H1 (cell line): ENCODE measurements at regions of chr5 and their contacts with region 1.

Region 1: DNA sequence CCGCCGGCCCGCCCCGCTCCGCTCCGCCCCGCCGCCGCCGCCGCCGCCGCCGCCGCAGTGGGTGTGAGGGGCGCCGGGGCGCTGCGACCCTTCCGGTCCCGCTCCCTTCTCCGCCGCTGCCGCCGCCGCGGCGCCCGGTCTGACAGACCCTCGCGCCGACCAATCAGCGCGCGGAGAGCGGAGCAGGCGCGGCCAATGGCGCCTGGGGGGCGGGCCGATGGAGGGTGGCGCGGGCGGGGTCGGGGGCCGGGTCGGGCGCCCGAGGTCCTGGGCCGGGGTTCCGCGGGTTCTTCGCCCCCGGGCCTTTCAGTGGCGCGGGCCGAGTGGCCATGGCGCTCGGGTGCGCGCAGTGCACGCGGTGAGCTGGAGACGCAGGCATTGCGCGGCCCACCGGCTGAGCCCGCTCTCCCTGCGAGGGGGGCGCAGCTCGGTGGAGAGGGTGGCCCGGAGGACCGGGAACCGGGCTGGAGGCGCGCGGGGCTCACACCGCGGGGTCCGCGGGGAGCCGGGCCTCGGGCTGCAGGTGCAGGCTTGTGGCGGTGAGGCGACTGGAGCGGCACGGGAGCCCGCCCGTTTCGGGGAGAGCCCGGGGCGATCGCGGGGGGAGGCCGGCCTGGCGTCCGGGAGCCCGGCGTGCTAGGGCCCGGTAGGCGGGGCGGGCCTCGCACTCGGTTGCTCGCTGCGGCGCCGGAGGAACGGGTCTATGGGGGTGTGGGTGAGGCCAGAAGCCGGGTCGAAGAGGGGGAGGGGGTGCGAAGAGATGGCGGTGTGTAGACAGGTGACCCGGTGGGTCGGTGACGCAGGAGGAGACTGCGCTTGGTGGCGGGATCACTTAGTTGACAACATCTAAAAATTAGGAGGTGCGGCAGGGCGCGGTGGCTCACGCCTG is at the start of gene MAPK9:
- DNase-seq: peak in 1 of 2 experiments; percentile 88
- H3K4me3 ChIP-seq: peak within 1 kb of the TSS; percentile 65 to 97 (median 75)
- H3K27ac ChIP-seq: peak within 1 kb of the TSS; percentile 47; the same call in 1 of the 2 replicates
- H3K4me1 ChIP-seq: peaks cover 0 to 6% (median 5%) of the 10 kb centered on the region in 4 experiments; a peak in 6 of 7 replicates
- H3K27me3 ChIP-seq: no peaks in the 10 kb centered on the region
- CTCF ChIP-seq: no peak
- EP300 ChIP-seq: no peak
- POLR2A ChIP-seq: peak in 1 of 2 experiments; percentile 51; a peak in 1 of 3 replicates
- RAD21 ChIP-seq: no peak
- total RNA-seq, gene MAPK9: 37.9 and 43.7 TPM in 2 replicates

Region 2: GRCh38 chr5:180135128-180135955 is 156.8 kb before region 1 on chr5:
- CTCF ChIA-PET with region 1: no interaction called
- POLR2A ChIA-PET with region 1: no interaction called
- DNase-seq: peak in 1 of 2 experiments; percentile 33
- H3K4me3 ChIP-seq: no peak overlapping the region
- H3K27ac ChIP-seq: no peak overlapping the region
- H3K4me1 ChIP-seq: no peaks in the 10 kb centered on the region; a peak in 1 of 7 replicates
- H3K27me3 ChIP-seq: peaks cover 0 to 2% (median 0%) of the 10 kb centered on the region in 4 experiments; a peak in 1 of 7 replicates
- CTCF ChIP-seq: no peak
- EP300 ChIP-seq: no peak
- POLR2A ChIP-seq: no peak
- RAD21 ChIP-seq: no peak

Region 3: GRCh38 chr5:180209137-180209581 is 83.0 kb before region 1 on chr5 and contains the start of gene RASGEF1C:
- CTCF ChIA-PET with region 1: interaction called, 16 read pairs
- POLR2A ChIA-PET with region 1: no interaction called
- DNase-seq: peak in 1 of 2 experiments; percentile 82
- H3K4me3 ChIP-seq: peak within 1 kb of the TSS; percentile 30 to 58 (median 34); a peak in 7 of 8 replicates
- H3K27ac ChIP-seq: no peak within 1 kb of the TSS
- H3K4me1 ChIP-seq: peaks cover 0 to 8% (median 4%) of the 10 kb centered on the region in 4 experiments; a peak in 4 of 7 replicates
- H3K27me3 ChIP-seq: peaks cover 8 to 31% (median 21%) of the 10 kb centered on the region in 4 experiments; a peak in 6 of 7 replicates
- CTCF ChIP-seq: peak in 2 of 3 experiments; percentile 63 to 91; a peak in 3 of 4 replicates
- EP300 ChIP-seq: no peak
- POLR2A ChIP-seq: no peak
- RAD21 ChIP-seq: peak in 1 of 2 experiments; percentile 51; a peak in 2 of 4 replicates
- total RNA-seq, gene RASGEF1C: 0.46 and 0.61 TPM in 2 replicates

Region 4: GRCh38 chr5:180304431-180305375 is 12.5 kb after region 1 on chr5:
- CTCF ChIA-PET with region 1: interaction called, 30 read pairs
- POLR2A ChIA-PET with region 1: interaction called, 12 read pairs
- DNase-seq: no peak
- H3K4me3 ChIP-seq: no peak overlapping the region
- H3K27ac ChIP-seq: no peak overlapping the region
- H3K4me1 ChIP-seq: no peaks in the 10 kb centered on the region
- H3K27me3 ChIP-seq: no peaks in the 10 kb centered on the region
- CTCF ChIP-seq: no peak
- EP300 ChIP-seq: no peak
- POLR2A ChIP-seq: peak in 1 of 2 experiments; percentile 16; a peak in 1 of 3 replicates
- RAD21 ChIP-seq: no peak

Region 5: DNA sequence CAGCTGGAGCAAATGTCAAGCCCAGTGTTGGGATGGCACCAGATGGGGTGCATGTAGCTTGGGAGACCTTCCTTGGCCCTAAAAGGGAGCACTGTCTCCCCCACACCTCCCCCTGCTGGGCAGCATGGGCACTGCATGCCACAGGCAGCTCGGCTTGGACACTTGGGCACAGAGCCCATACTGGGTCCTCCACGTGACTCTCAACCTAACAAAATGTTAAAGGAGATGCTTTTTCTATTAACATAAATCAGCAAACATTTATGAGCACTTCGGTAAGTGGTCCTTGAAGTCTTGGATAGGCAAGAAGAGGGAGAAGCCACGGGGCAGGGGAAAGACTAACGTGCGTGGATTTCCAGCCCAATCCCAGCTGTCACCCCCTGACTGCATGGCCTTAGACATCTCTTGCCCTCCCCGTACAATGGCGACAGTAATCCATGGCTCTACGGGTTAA is 23.6 kb after region 1 on chr5:
- CTCF ChIA-PET with region 1: interaction called, 53 read pairs
- POLR2A ChIA-PET with region 1: interaction called, 13 read pairs
- DNase-seq: peak in 1 of 2 experiments; percentile 93
- H3K4me3 ChIP-seq: no peak overlapping the region
- H3K27ac ChIP-seq: no peak overlapping the region
- H3K4me1 ChIP-seq: no peaks in the 10 kb centered on the region
- H3K27me3 ChIP-seq: no peaks in the 10 kb centered on the region
- CTCF ChIP-seq: peak; percentile 91 to 99 (median 98)
- EP300 ChIP-seq: no peak
- POLR2A ChIP-seq: no peak
- RAD21 ChIP-seq: peak; percentile 59 to 72

Region 6: GRCh38 chr5:180328296-180329137 is 36.3 kb after region 1 on chr5:
- CTCF ChIA-PET with region 1: interaction called, 25 read pairs
- POLR2A ChIA-PET with region 1: interaction called, 10 read pairs
- DNase-seq: peak; percentile 68 to 90
- H3K4me3 ChIP-seq: no peak overlapping the region
- H3K27ac ChIP-seq: no peak overlapping the region
- H3K4me1 ChIP-seq: peaks cover 12 to 16% (median 13%) of the 10 kb centered on the region in 4 experiments
- H3K27me3 ChIP-seq: no peaks in the 10 kb centered on the region
- CTCF ChIP-seq: peak in 2 of 3 experiments; percentile 77 to 91; a peak in 3 of 4 replicates
- EP300 ChIP-seq: no peak
- POLR2A ChIP-seq: peak in 1 of 2 experiments; percentile 51; a peak in 2 of 3 replicates
- RAD21 ChIP-seq: peak; percentile 47 to 70

Region 7: DNA sequence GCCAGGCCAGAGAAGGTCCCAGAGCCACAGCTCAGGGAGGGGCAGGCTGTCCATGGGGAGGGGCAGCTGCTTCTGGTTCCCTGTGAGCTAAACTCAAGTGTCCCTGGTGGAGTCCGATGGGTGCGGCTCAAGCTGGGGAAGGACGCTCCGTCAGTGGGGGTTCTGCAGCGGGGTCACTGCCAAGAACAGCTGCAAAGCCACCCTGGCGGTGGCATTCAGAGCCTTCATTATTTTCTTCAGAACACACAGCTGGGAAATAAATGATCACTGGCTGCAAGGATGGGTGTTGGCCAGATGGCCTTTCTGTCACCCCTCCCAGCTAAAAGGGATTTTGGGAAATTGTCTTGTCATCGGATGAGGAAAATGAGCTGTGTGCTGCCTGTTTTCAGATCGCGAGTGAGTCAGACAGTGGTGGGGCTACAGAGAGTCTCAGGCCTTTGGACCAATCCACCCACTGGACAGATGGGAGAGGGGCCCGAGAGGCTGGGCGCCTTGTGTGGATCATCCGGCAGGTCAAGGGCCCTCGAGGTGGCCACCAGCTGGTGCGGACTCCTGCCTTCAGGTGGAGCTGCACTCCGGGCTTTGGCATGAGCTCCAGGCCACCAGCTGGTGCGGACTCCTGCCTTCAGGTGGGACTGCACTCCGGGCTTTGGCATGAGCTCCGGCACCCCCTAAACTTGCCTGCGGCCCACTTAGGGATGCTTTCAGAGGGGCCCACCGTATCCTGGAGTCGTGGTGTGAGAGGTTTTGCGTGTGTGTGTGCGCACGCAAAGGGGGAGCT is 78.9 kb after region 1 on chr5:
- CTCF ChIA-PET with region 1: interaction called, 12 read pairs
- POLR2A ChIA-PET with region 1: no interaction called
- DNase-seq: no peak
- H3K4me3 ChIP-seq: no peak overlapping the region
- H3K27ac ChIP-seq: no peak overlapping the region
- H3K4me1 ChIP-seq: no peaks in the 10 kb centered on the region; a peak in 2 of 7 replicates
- H3K27me3 ChIP-seq: no peaks in the 10 kb centered on the region; a peak in 1 of 7 replicates
- CTCF ChIP-seq: peak in 1 of 3 experiments; percentile 32; a peak in 1 of 4 replicates
- EP300 ChIP-seq: no peak
- POLR2A ChIP-seq: no peak
- RAD21 ChIP-seq: peak; percentile 25 to 47; a peak in 3 of 4 replicates

Region 8: GRCh38 chr5:180486636-180487149 is 194.5 kb after region 1 on chr5:
- CTCF ChIA-PET with region 1: interaction called, 24 read pairs
- POLR2A ChIA-PET with region 1: interaction called, 3 read pairs
- DNase-seq: no peak
- H3K4me3 ChIP-seq: no peak overlapping the region
- H3K27ac ChIP-seq: no peak overlapping the region
- H3K4me1 ChIP-seq: peaks cover 0 to 5% (median 2%) of the 10 kb centered on the region in 4 experiments; a peak in 4 of 7 replicates
- H3K27me3 ChIP-seq: no peaks in the 10 kb centered on the region
- CTCF ChIP-seq: no peak
- EP300 ChIP-seq: no peak
- POLR2A ChIP-seq: no peak
- RAD21 ChIP-seq: no peak